GM12878 (cell line): ENCODE measurements at regions of chr4 and their contacts with region 1.

Region 1: GRCh38 chr4:78612398-78613178 is 61.0 kb downstream of the ANXA3 start:
- DNase-seq: no peak
- ATAC-seq: peak; percentile 64
- H3K4me3 ChIP-seq: no peak overlapping the region
- H3K27ac ChIP-seq: no peak overlapping the region
- H3K4me1 ChIP-seq: peaks cover 35% of the 10 kb centered on the region
- H3K27me3 ChIP-seq: no peaks in the 10 kb centered on the region
- CTCF ChIP-seq: peak; percentile 55 to 80 (median 62)
- EP300 ChIP-seq: no peak
- POLR2A ChIP-seq: no peak
- RAD21 ChIP-seq: peak; percentile 89

Region 2: DNA sequence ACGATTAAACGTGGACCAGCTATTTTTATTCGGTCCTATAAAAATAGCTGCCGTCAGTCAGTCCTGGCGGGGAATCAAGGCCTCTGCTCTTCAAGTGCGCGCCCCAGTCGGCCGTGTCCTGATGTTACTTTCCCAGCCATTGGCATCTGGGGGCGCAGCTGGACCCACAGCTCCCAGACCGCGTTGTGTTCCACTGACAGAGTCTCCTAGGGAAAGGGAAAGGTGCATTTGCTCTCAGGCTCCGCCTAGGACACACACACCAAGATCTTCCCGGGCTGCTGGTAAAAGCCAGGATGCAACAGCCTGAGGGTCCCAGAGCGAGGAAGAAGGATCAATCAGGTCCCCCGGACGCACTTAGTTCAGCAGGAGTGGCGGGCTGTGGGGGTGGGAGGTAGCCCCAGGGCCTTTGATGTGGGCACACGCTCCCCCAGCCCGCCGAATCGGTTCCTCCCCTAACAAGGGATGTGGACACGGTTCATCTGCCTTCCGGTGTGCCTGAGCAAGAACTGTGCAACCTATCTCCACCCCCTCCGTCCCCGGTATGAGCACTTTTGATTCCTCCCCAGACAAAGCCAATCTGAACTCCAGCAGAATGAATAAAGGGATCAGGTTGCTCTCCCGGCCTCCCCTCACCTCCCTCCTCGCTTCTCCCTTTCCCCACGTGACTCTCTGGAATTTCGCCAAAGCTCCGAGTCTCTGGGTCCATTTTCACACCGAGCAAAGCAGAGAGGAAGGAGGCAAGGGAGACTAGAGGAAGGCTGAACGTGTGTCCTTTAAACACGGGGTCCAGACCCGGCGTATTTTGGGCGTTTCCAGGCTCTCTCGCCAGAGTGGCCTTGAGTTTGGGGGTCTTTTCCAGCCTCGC is 556.1 kb before region 1 on chr4:
- CTCF ChIA-PET with region 1: interaction called, 6 read pairs
- POLR2A ChIA-PET with region 1: no interaction called
- RAD21 ChIA-PET with region 1: interaction called, 15 read pairs
- SMC1A ChIA-PET with region 1: interaction called, 20 read pairs
- in situ Hi-C with region 1: no loop called
- intact Hi-C with region 1: loop called (anchors 5 kb)
- DNase-seq: no peak
- ATAC-seq: peak; percentile 82
- H3K4me3 ChIP-seq: peak overlapping the region; percentile 63
- H3K27ac ChIP-seq: no peak overlapping the region
- H3K4me1 ChIP-seq: peaks cover 12% of the 10 kb centered on the region; the same call in 1 of the 2 replicates
- H3K27me3 ChIP-seq: peaks cover 0 to 35% of the 10 kb centered on the region in 2 experiments; a peak in 3 of 4 replicates
- CTCF ChIP-seq: no peak
- EP300 ChIP-seq: no peak
- POLR2A ChIP-seq: no peak
- RAD21 ChIP-seq: no peak

Region 3: GRCh38 chr4:78638337-78639172 is 26.0 kb after region 1 on chr4:
- CTCF ChIA-PET with region 1: interaction called, 101 read pairs
- POLR2A ChIA-PET with region 1: interaction called, 106 read pairs
- RAD21 ChIA-PET with region 1: interaction called, 265 read pairs
- SMC1A ChIA-PET with region 1: interaction called, 379 read pairs
- in situ Hi-C with region 1: no loop called
- intact Hi-C with region 1: loop called (anchors 1 kb)
- DNase-seq: peak; percentile 86
- ATAC-seq: peak; percentile 78
- H3K4me3 ChIP-seq: no peak overlapping the region; the same call in 1 of the 2 replicates
- H3K27ac ChIP-seq: peak overlapping the region; percentile 62
- H3K4me1 ChIP-seq: peaks cover 57% of the 10 kb centered on the region
- H3K27me3 ChIP-seq: no peaks in the 10 kb centered on the region
- CTCF ChIP-seq: no peak
- EP300 ChIP-seq: peak; percentile 79; a peak in 3 of 4 replicates
- POLR2A ChIP-seq: no peak
- RAD21 ChIP-seq: no peak

Region 4: DNA sequence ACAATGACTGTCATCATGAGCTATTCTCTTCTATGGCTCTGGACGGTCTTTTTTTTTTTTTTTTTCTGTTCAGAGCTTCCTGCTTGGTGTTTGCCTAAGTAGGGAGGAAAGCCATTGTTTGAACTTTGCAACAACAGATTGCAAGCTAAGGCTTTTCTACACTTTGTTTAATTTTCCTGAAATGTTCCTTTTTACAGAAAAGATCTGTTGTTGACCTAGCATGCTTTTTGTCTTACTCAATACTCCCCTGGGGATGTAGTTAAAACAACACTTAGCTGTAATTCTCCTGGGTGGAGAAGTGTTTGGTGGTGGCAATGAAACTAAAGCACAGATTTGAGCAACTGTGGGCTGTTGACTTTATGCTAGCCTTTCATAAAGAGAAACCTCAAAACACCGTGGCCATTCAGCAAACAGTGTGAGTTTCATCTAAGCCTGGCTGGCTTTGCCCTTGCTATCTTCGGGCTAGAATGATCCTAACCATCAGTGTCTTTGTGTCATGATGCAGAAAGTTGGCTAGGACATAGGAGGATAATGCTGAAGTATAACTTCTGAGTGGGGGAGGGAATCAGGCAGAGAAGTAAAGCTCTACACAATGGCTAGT is 49.4 kb after region 1 on chr4:
- CTCF ChIA-PET with region 1: interaction called, 7 read pairs
- POLR2A ChIA-PET with region 1: interaction called, 6 read pairs
- RAD21 ChIA-PET with region 1: interaction called, 11 read pairs
- SMC1A ChIA-PET with region 1: interaction called, 79 read pairs
- in situ Hi-C with region 1: no loop called
- intact Hi-C with region 1: loop called (anchors 1 kb)
- DNase-seq: peak; percentile 77
- ATAC-seq: peak; percentile 90
- H3K4me3 ChIP-seq: no peak overlapping the region
- H3K27ac ChIP-seq: no peak overlapping the region
- H3K4me1 ChIP-seq: peaks cover 33% of the 10 kb centered on the region
- H3K27me3 ChIP-seq: peaks cover 0 to 1% of the 10 kb centered on the region in 2 experiments; a peak in 1 of 4 replicates
- CTCF ChIP-seq: no peak
- EP300 ChIP-seq: peak in 1 of 2 experiments; percentile 64; a peak in 1 of 4 replicates
- POLR2A ChIP-seq: no peak
- RAD21 ChIP-seq: no peak

Region 5: GRCh38 chr4:78749972-78750727 is 137.6 kb after region 1 on chr4:
- CTCF ChIA-PET with region 1: interaction called, 21 read pairs
- POLR2A ChIA-PET with region 1: interaction called, 3 read pairs
- RAD21 ChIA-PET with region 1: interaction called, 19 read pairs
- SMC1A ChIA-PET with region 1: interaction called, 25 read pairs
- in situ Hi-C with region 1: no loop called
- intact Hi-C with region 1: loop called (anchors 1 kb)
- DNase-seq: peak; percentile 97
- ATAC-seq: peak; percentile 93
- H3K4me3 ChIP-seq: no peak overlapping the region
- H3K27ac ChIP-seq: peak overlapping the region; percentile 66
- H3K4me1 ChIP-seq: peaks cover 42% of the 10 kb centered on the region
- H3K27me3 ChIP-seq: no peaks in the 10 kb centered on the region
- CTCF ChIP-seq: no peak
- EP300 ChIP-seq: peak; percentile 93 to 97
- POLR2A ChIP-seq: no peak
- RAD21 ChIP-seq: no peak

Region 6: DNA sequence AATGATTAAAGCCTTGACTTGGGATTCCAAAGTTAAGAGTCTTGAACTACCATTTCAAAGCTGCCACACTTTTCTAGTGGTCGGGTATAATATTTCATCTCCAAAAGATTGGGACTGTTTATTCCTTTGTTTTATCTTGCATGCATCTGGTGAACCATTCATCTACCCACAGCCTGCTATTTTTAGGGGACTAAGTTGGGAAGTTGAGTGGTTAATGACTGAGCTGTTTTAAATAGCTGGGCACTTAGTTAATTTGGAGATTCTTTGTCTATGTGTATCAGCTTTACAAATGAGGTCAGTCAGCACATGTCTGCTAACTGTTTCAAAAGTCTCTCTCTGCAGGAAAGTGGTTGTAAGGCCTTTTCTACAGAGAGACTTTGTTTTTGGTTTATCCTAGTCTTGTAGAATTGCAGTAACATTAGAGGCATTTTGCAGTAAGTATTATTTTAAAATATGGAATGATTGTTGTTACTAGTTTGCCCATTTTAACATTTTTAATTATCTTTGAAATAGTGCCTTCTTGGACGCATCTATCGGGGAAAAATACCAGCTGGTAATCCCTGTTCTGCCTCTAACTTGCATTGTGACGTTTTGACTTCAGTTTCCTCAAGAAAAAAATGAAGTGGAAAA is 171.8 kb after region 1 on chr4:
- CTCF ChIA-PET with region 1: interaction called, 4 read pairs
- POLR2A ChIA-PET with region 1: interaction called, 5 read pairs
- RAD21 ChIA-PET with region 1: interaction called, 49 read pairs
- SMC1A ChIA-PET with region 1: interaction called, 80 read pairs
- in situ Hi-C with region 1: no loop called
- intact Hi-C with region 1: no loop called
- DNase-seq: no peak
- ATAC-seq: no peak
- H3K4me3 ChIP-seq: no peak overlapping the region
- H3K27ac ChIP-seq: no peak overlapping the region
- H3K4me1 ChIP-seq: peaks cover 3% of the 10 kb centered on the region; the same call in 1 of the 2 replicates
- H3K27me3 ChIP-seq: no peaks in the 10 kb centered on the region
- CTCF ChIP-seq: no peak
- EP300 ChIP-seq: no peak
- POLR2A ChIP-seq: no peak
- RAD21 ChIP-seq: no peak

Region 7: GRCh38 chr4:79013756-79014155 is 401.2 kb after region 1 on chr4:
- CTCF ChIA-PET with region 1: no interaction called
- POLR2A ChIA-PET with region 1: no interaction called
- RAD21 ChIA-PET with region 1: no interaction called
- SMC1A ChIA-PET with region 1: no interaction called
- in situ Hi-C with region 1: no loop called
- intact Hi-C with region 1: no loop called
- DNase-seq: no peak
- ATAC-seq: no peak
- H3K4me3 ChIP-seq: no peak overlapping the region
- H3K27ac ChIP-seq: no peak overlapping the region
- H3K4me1 ChIP-seq: no peaks in the 10 kb centered on the region
- H3K27me3 ChIP-seq: no peaks in the 10 kb centered on the region
- CTCF ChIP-seq: no peak
- EP300 ChIP-seq: no peak
- POLR2A ChIP-seq: no peak
- RAD21 ChIP-seq: no peak